ENCODE measurements at regions of chr3 and their contacts with region 1.

Region 1: GRCh38 chr3:27253831-27254230 is 115.4 kb downstream of the NEK10 start:
- DNase-seq: peak; percentile 5
- H3K4me3 ChIP-seq: no peak overlapping the region
- H3K27ac ChIP-seq: no peak overlapping the region
- H3K4me1 ChIP-seq: no peaks in the 10 kb centered on the region
- CTCF ChIP-seq: peak; percentile 48

Region 2: GRCh38 chr3:27134165-27134796 is 119.5 kb before region 1 on chr3:
- CTCF ChIA-PET with region 1: no interaction called
- POLR2A ChIA-PET with region 1: no interaction called
- intact Hi-C with region 1: loop called (anchors 10 kb)
- DNase-seq: peak; percentile 62
- H3K4me3 ChIP-seq: no peak overlapping the region
- H3K27ac ChIP-seq: no peak overlapping the region
- H3K4me1 ChIP-seq: no peaks in the 10 kb centered on the region
- CTCF ChIP-seq: peak; percentile 87

Region 3: GRCh38 chr3:27271890-27272289 is 18.1 kb after region 1 on chr3:
- CTCF ChIA-PET with region 1: no interaction called
- POLR2A ChIA-PET with region 1: no interaction called
- intact Hi-C with region 1: no loop called
- DNase-seq: no peak
- H3K4me3 ChIP-seq: no peak overlapping the region
- H3K27ac ChIP-seq: no peak overlapping the region
- H3K4me1 ChIP-seq: no peaks in the 10 kb centered on the region
- CTCF ChIP-seq: no peak